CD14-positive monocyte (primary cell): ENCODE measurements at regions of chr5 and their contacts with region 1.

Region 1: DNA sequence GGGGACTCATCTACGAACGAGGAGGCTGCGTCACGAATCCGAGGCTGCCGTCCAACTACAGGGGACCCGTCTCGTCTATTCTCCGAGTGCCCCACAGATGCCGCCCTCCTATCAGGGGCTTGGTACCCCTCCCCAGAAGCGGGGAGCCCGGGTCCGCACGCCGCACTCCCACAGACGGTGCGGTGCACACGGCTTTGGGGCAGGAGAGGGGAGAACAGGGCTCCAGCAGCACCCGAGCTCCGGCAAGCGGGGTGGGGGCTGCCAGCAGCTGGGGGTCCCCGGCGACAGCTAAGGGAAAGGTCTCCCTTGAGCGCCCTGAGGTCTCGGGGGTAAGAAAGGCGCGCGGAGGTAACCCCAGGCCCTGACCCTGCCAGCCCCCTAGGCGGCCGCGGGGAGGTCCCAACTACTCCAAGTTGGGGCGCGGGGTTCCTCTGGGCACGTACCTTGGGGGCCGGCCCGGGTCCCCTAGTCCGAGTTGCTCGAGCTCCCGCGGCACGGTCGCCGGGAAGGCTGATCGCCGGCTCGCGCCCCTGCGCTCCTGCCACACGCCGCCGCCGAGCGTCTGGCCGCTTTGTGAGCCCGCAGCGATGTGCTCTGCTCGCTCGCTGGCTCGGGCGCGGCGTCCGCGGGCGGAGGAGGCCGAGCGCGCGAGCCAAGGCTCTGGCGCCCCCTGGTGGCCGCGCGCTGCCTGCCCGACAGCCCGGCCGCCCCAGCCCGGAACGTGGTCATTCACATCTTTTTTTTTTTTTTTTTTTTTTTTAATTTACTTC is at the start of gene SPOCK1:
- DNase-seq: peak; percentile 32 to 63 (median 61)
- H3K4me3 ChIP-seq: peak within 1 kb of the TSS in 1 of 3 experiments; percentile 57
- H3K4me3 Mint-ChIP-seq: peak within 1 kb of the TSS in 1 of 2 donors; percentile 82
- H3K27ac ChIP-seq: no peak within 1 kb of the TSS
- H3K27ac Mint-ChIP-seq: no peak within 1 kb of the TSS
- H3K4me1 ChIP-seq: peaks cover 5 to 12% of the 10 kb centered on the region in 2 donors
- H3K4me1 Mint-ChIP-seq: peaks cover 2% of the 10 kb centered on the region
- H3K27me3 ChIP-seq: peaks cover 32 to 36% of the 10 kb centered on the region in 2 donors
- H3K27me3 Mint-ChIP-seq: peaks cover 31 to 42% (median 34%) of the 10 kb centered on the region in 3 donors
- CTCF ChIP-seq: peak; percentile 79
- polyA plus RNA-seq, gene SPOCK1: 1.8 to 5.7 (median 2.1) TPM

Region 2: GRCh38 chr5:136864960-136865359 is 634.0 kb before region 1 on chr5:
- intact Hi-C with region 1: no loop called
- DNase-seq: no peak
- H3K4me3 ChIP-seq: no peak overlapping the region
- H3K4me3 Mint-ChIP-seq: no peak overlapping the region
- H3K27ac ChIP-seq: no peak overlapping the region
- H3K27ac Mint-ChIP-seq: no peak overlapping the region
- H3K4me1 ChIP-seq: no peaks in the 10 kb centered on the region
- H3K4me1 Mint-ChIP-seq: no peaks in the 10 kb centered on the region
- H3K27me3 ChIP-seq: no peaks in the 10 kb centered on the region
- H3K27me3 Mint-ChIP-seq: peaks cover 0 to 2% (median 2%) of the 10 kb centered on the region in 3 donors
- CTCF ChIP-seq: no peak

Region 3: DNA sequence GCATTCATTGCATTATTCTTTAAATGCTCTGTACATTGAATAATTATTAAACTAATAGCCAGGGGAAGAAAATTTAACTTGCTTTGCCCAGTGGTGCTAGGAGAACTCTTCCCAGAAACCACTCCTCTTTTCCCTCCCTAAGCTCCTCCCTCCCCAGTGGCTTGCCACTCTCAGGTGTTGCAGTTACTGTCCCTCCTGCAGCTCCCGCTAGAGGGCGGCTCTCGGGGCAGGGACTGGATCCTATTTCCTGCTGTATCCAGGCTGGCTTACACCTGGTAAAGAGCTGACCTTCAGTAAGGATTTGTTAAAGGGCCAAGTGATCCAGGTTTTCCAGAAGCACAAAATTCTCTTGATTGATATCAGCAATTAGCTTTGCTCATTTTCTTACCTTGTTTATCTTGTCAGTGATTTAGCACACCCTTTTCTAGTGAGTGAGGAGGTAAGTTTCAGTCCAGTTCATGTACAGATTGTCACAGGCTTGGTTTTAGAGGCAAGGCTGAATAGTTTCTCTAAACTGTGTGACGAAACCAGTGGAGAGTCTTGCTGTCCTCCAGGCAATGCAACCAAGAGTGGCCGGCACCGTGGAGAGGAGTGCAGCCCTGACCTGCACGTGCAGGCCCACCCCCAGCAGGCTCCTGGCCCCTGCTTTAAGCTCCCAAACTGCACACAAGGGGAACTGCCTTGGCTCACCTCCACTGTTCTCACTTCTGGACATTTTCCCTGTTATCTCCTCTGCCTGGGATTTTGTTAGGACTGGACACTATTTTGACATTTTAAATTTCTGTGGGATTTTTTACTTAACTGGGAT is 423.6 kb before region 1 on chr5:
- intact Hi-C with region 1: no loop called
- DNase-seq: no peak
- H3K4me3 ChIP-seq: no peak overlapping the region
- H3K4me3 Mint-ChIP-seq: no peak overlapping the region
- H3K27ac ChIP-seq: no peak overlapping the region
- H3K27ac Mint-ChIP-seq: no peak overlapping the region
- H3K4me1 ChIP-seq: no peaks in the 10 kb centered on the region
- H3K4me1 Mint-ChIP-seq: no peaks in the 10 kb centered on the region
- H3K27me3 ChIP-seq: no peaks in the 10 kb centered on the region
- H3K27me3 Mint-ChIP-seq: peaks cover 0 to 6% (median 5%) of the 10 kb centered on the region in 3 donors
- CTCF ChIP-seq: peak; percentile 25

Region 4: DNA sequence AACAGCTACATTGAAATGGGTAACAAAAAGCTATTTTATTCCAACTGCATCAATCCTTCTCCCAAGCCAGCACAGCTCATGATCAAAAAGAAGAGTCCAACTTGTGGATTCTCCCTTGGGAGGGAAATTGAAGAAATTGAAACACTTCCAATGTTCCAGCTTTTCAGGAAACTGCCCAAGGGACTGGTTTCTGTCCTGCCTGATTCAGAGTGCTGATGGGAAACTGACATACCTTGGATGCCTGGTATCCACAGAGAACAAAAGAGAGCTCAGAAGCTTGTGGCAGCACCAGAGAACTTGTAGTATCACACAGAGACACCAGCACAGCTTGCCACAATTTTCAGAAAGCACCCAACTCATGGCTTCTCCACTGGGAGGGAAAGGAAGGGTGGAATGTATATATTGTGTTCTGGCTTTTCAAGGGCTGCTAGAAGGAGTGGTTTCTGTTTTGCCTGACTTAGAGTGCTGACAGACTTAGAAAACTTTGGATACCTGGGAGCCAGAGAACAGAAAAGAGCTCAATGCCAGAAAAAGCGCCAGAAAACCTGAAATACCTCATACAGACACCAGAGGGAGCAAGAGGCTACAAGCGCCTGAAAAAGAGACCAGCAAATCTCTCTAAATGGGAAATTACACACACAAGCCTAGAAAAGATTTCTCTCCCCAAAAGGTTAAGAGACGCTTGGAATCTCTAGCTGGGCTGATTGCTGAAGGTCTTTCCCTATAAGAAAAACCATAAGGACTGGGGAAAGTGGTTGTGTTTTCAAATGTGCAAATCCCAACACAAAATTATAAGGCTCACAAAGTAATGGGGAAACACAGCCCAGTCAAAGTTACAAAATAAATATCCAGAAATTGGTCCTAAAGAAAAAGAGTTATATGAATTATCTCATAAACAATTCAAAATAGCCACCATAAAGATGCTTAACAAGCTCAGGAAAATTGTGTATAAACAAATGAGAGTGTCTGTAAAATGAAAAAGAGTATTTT is 178.6 kb before region 1 on chr5:
- intact Hi-C with region 1: loop called (anchors 2 to 5 kb)
- DNase-seq: peak; percentile 10 to 36 (median 21)
- H3K4me3 ChIP-seq: no peak overlapping the region
- H3K4me3 Mint-ChIP-seq: no peak overlapping the region
- H3K27ac ChIP-seq: no peak overlapping the region
- H3K27ac Mint-ChIP-seq: no peak overlapping the region
- H3K4me1 ChIP-seq: no peaks in the 10 kb centered on the region
- H3K4me1 Mint-ChIP-seq: no peaks in the 10 kb centered on the region
- H3K27me3 ChIP-seq: peaks cover 3 to 8% of the 10 kb centered on the region in 2 donors
- H3K27me3 Mint-ChIP-seq: peaks cover 5 to 27% (median 15%) of the 10 kb centered on the region in 3 donors
- CTCF ChIP-seq: peak; percentile 87

Region 5: DNA sequence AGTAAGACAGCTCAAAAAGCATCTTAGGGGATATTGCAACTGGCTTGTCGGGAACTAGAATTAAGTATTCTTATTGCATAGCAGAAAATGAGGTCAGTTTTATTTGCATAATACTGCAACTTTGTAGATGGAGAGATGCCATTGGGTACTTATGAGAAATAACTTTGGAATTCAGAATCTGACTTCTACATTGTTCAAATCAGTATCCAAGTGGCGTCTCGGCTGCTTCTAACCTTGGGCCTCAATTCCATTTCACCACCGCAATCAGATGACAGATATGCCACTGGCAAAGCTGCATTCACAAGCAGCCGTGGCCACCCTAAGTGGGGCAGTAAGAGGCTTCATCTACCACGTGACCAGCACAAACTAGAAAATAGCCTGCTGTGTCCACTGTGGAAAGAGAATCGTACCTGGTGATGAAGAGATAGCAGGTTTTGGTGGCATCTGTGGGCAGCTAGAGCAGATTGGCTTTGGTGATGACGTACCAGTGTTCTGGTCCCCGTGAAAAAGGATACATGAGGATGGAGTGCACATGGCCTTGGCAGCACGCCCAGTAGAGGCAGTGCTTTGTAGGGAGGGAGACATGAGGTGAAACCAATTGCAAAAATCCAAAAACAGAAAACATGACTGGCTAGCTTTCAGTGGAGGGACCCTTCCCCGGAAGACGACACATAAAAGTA is 120.4 kb after region 1 on chr5:
- intact Hi-C with region 1: no loop called
- DNase-seq: no peak
- H3K4me3 ChIP-seq: no peak overlapping the region
- H3K4me3 Mint-ChIP-seq: no peak overlapping the region
- H3K27ac ChIP-seq: no peak overlapping the region
- H3K27ac Mint-ChIP-seq: no peak overlapping the region
- H3K4me1 ChIP-seq: peaks cover 15 to 20% of the 10 kb centered on the region in 2 donors
- H3K4me1 Mint-ChIP-seq: peaks cover 24% of the 10 kb centered on the region
- H3K27me3 ChIP-seq: no peaks in the 10 kb centered on the region
- H3K27me3 Mint-ChIP-seq: peaks cover 0 to 3% (median 3%) of the 10 kb centered on the region in 3 donors
- CTCF ChIP-seq: no peak

Region 6: DNA sequence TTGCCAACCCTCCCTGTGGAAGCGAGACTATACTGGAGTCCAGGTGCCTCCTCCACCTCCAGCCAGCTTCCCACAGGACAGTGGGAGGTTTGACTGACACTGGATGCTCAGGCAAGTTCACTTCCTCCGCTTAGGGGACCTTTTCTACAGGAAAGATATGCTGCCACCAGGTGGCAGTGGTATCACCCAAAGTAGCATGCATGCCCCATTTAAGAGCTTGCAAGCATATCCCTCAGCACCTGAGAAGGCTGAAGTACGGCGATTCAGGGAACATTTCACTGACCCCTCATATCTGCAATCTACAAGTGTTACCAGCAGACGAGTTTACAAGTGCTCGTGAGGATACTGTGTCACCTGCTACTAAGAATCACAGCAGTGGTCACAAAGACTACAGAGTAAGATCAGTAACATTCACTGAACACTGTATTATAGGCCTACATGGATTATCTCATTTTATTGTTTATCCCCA is 161.5 kb after region 1 on chr5:
- intact Hi-C with region 1: no loop called
- DNase-seq: peak; percentile 38 to 52 (median 51)
- H3K4me3 ChIP-seq: no peak overlapping the region
- H3K4me3 Mint-ChIP-seq: no peak overlapping the region
- H3K27ac ChIP-seq: no peak overlapping the region
- H3K27ac Mint-ChIP-seq: no peak overlapping the region
- H3K4me1 ChIP-seq: no peaks in the 10 kb centered on the region
- H3K4me1 Mint-ChIP-seq: no peaks in the 10 kb centered on the region
- H3K27me3 ChIP-seq: no peaks in the 10 kb centered on the region
- H3K27me3 Mint-ChIP-seq: peaks cover 0 to 5% (median 1%) of the 10 kb centered on the region in 3 donors
- CTCF ChIP-seq: peak; percentile 83